HepG2 (cell line): ENCODE measurements at regions of chr2 and their contacts with region 1.

Region 1: DNA sequence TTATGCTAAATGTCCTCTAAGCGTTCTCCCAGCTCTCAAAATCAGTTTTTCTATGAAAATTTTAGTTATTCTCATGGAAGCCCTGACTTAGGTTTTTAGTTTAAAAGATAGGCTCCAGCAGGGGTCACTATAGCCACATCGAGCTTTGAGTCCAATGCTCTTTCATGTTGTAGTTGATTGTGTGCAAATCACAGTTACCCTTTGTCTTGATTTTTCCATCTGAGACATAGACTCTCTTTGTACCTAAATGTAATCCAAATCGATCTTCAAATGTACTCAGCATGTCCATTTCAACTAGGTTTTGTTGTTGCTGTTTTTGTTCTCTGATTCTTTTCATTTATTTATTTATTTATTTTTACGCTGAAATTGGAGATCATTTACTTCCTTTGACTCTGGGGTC is 26.4 kb upstream of the MSTN start:
- DNase-seq: peak; percentile 73
- ATAC-seq: peak; percentile 77
- H3K4me3 ChIP-seq: no peak overlapping the region
- H3K27ac ChIP-seq: no peak overlapping the region
- H3K4me1 ChIP-seq: no peaks in the 10 kb centered on the region
- H3K27me3 ChIP-seq: no peaks in the 10 kb centered on the region
- CTCF ChIP-seq: peak; percentile 81
- EP300 ChIP-seq: no peak
- POLR2A ChIP-seq: no peak
- RAD21 ChIP-seq: peak; percentile 83

Region 2: DNA sequence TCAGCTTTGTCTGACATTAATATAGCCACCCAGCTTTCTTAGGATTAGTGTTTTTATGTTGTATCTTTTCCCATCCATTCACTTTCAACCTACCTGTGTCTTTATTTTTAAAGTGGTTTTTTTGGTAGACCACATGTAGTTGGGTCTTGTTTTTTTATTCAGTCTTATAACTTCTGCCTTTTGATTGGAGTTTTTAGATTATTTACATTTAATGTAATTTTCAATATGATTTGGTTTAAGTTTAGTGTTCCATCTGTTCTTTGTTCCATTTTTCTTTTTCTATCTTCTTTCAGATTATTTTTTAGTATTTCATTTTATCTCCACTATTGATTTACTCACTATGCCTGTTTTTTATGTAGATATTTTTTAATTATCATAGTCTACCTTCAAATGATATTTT is 13.3 kb before region 1 on chr2:
- CTCF ChIA-PET with region 1: no interaction called
- POLR2A ChIA-PET with region 1: no interaction called
- in situ Hi-C with region 1: no loop called
- intact Hi-C with region 1: no loop called
- DNase-seq: no peak
- ATAC-seq: no peak
- H3K4me3 ChIP-seq: no peak overlapping the region
- H3K27ac ChIP-seq: no peak overlapping the region
- H3K4me1 ChIP-seq: no peaks in the 10 kb centered on the region
- H3K27me3 ChIP-seq: no peaks in the 10 kb centered on the region
- CTCF ChIP-seq: no peak
- EP300 ChIP-seq: no peak
- POLR2A ChIP-seq: no peak
- RAD21 ChIP-seq: no peak

Region 3: DNA sequence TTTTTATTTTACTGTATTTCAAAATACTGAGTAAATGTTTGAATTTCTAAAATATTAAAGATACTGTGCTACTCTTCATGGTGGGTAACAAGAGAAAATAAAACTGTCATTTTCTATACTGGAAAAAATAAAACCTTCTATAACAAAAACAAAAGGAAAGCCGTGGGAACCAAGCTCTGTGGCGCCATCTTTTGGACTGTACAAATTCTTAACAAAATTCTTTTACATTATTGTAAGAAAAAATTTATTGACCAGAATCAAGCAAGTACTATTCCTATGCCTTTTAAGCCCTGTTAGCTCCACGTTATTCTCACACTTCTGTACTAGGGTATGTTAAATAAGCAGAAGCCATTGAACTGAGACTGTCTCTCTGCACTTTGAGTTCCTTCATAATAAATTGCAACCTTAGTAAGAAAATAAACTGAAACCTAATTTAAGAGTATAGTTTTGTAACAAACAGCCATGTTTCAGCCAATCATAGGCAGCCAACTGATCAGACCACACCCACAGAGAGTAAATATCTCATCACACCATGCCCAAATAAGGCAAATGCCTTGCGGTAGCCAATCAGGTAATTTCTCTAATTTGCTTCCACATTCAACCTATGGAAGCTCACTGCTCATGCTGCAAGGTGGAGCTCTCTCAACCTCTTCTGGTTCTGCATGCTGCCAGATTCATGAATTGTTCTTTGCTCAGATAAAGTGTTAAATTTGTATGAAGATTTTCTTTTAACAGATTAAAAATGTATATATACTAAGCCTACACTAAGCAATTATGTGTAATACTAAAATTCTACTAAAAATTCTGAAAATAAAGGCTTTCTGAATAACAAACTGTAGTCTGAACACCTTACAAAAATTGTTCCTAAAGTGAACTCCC is 188.6 kb after region 1 on chr2:
- CTCF ChIA-PET with region 1: interaction called, 11 read pairs
- POLR2A ChIA-PET with region 1: no interaction called
- in situ Hi-C with region 1: loop called (anchors 5 kb)
- intact Hi-C with region 1: loop called (anchors 1 kb)
- DNase-seq: peak; percentile 32
- ATAC-seq: peak; percentile 73
- H3K4me3 ChIP-seq: no peak overlapping the region
- H3K27ac ChIP-seq: no peak overlapping the region
- H3K4me1 ChIP-seq: peaks cover 22% of the 10 kb centered on the region
- H3K27me3 ChIP-seq: no peaks in the 10 kb centered on the region
- CTCF ChIP-seq: peak; percentile 51
- EP300 ChIP-seq: no peak
- POLR2A ChIP-seq: no peak
- RAD21 ChIP-seq: no peak

Region 4: GRCh38 chr2:190319555-190320498 is 230.9 kb after region 1 on chr2 and contains the start of gene HIBCH:
- CTCF ChIA-PET with region 1: interaction called, 17 read pairs
- POLR2A ChIA-PET with region 1: no interaction called
- in situ Hi-C with region 1: loop called (anchors 5 kb)
- intact Hi-C with region 1: no loop called
- DNase-seq: peak; percentile 99
- ATAC-seq: peak; percentile 97
- H3K4me3 ChIP-seq: peak within 1 kb of the TSS; percentile 78 to 86 (median 83)
- H3K27ac ChIP-seq: peak within 1 kb of the TSS; percentile 74
- H3K4me1 ChIP-seq: peaks cover 49% of the 10 kb centered on the region
- H3K27me3 ChIP-seq: no peaks in the 10 kb centered on the region; a peak in 1 of 5 replicates
- CTCF ChIP-seq: peak; percentile 95
- EP300 ChIP-seq: no peak; a peak in 1 of 4 replicates
- POLR2A ChIP-seq: peak; percentile 86 to 90
- RAD21 ChIP-seq: peak; percentile 69; the same call in 1 of the 2 replicates
- total RNA-seq, gene HIBCH: 49.5 and 67.0 TPM in 2 replicates

Region 5: DNA sequence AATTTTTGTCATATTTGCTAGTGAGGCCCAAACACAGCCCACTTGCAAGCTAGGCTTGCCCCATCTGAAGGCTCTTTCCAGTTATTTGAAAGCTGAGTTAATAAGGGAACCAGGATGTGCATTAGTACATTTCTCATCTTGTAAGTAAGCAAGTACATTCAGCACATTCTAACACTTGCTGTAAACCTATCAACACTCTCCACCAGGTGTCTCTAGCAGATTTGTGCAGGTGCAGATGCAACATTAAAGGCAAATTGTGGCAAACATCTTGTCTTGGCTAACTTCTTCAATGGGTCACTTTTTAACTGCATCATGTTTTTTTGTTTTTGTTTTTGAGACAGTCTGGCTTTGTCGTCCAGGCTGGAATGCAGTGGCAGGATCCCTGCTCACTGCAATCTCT is 293.9 kb after region 1 on chr2:
- CTCF ChIA-PET with region 1: no interaction called
- POLR2A ChIA-PET with region 1: no interaction called
- in situ Hi-C with region 1: loop called (anchors 10 kb)
- intact Hi-C with region 1: no loop called
- DNase-seq: peak; percentile 62
- ATAC-seq: peak; percentile 76
- H3K4me3 ChIP-seq: no peak overlapping the region
- H3K27ac ChIP-seq: no peak overlapping the region
- H3K4me1 ChIP-seq: peaks cover 23% of the 10 kb centered on the region
- H3K27me3 ChIP-seq: no peaks in the 10 kb centered on the region; a peak in 1 of 5 replicates
- CTCF ChIP-seq: peak; percentile 77
- EP300 ChIP-seq: no peak
- POLR2A ChIP-seq: no peak
- RAD21 ChIP-seq: peak; percentile 60

Region 6: GRCh38 chr2:190396271-190396670 is 307.4 kb after region 1 on chr2:
- CTCF ChIA-PET with region 1: no interaction called
- POLR2A ChIA-PET with region 1: no interaction called
- in situ Hi-C with region 1: no loop called
- intact Hi-C with region 1: no loop called
- DNase-seq: no peak
- ATAC-seq: no peak; the same call in 2 of the 3 replicates
- H3K4me3 ChIP-seq: no peak overlapping the region
- H3K27ac ChIP-seq: no peak overlapping the region
- H3K4me1 ChIP-seq: peaks cover 5% of the 10 kb centered on the region; the same call in 1 of the 2 replicates
- H3K27me3 ChIP-seq: no peaks in the 10 kb centered on the region
- CTCF ChIP-seq: no peak
- EP300 ChIP-seq: no peak
- POLR2A ChIP-seq: no peak
- RAD21 ChIP-seq: no peak

Region 7: DNA sequence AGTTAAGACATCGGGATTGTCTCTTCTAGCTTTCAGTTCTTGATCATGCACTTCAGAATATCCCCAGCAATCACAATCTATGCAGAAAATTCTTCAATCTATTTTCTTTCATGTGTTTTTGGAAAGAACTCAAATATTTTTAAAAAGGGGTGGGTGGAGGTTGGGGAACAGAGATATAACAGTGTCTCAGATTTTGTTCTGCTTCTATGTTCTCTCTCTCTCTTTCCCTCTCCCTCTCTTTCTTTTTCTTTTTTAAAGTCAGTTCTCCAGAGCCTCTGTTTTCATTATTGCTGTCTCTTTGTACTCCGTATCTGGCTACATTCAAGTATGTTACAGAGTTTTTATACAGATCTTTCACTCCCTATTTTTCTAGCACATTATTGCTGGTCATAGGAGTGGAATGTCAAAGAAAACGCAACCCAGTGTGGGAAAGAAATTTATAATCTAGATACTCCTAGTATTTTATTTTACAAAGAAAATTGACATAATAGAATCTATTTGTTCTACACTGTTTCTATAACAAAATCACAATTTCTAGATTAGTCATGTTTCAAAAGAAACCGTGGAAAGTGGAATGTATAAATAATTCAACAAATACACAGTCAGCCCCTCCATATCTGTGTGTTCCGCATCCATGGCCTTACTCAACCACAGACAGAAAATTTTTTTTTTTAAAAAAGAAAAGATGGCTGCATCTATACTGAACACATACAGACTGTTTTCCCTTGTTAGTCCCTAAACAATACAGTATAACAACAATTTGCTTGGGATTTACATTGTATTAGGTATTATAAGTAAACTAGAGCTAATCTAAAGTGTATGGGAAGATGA is 456.9 kb after region 1 on chr2:
- CTCF ChIA-PET with region 1: no interaction called
- POLR2A ChIA-PET with region 1: no interaction called
- in situ Hi-C with region 1: no loop called
- intact Hi-C with region 1: no loop called
- DNase-seq: no peak
- ATAC-seq: no peak
- H3K4me3 ChIP-seq: no peak overlapping the region
- H3K27ac ChIP-seq: no peak overlapping the region
- H3K4me1 ChIP-seq: peaks cover 7% of the 10 kb centered on the region; the same call in 1 of the 2 replicates
- H3K27me3 ChIP-seq: no peaks in the 10 kb centered on the region
- CTCF ChIP-seq: no peak
- EP300 ChIP-seq: no peak
- POLR2A ChIP-seq: no peak
- RAD21 ChIP-seq: no peak

Region 8: GRCh38 chr2:190679813-190680591 is 591.1 kb after region 1 on chr2:
- CTCF ChIA-PET with region 1: interaction called, 3 read pairs
- POLR2A ChIA-PET with region 1: no interaction called
- in situ Hi-C with region 1: no loop called
- intact Hi-C with region 1: loop called (anchors 10 kb)
- DNase-seq: peak; percentile 28
- ATAC-seq: peak; percentile 97
- H3K4me3 ChIP-seq: no peak overlapping the region
- H3K27ac ChIP-seq: no peak overlapping the region
- H3K4me1 ChIP-seq: peaks cover 9% of the 10 kb centered on the region; the same call in 1 of the 2 replicates
- H3K27me3 ChIP-seq: no peaks in the 10 kb centered on the region
- CTCF ChIP-seq: peak; percentile 84
- EP300 ChIP-seq: no peak
- POLR2A ChIP-seq: no peak
- RAD21 ChIP-seq: peak; percentile 65